HEK293 (cell line): ENCODE measurements at regions of chr2 and their contacts with region 1.

Region 1: DNA sequence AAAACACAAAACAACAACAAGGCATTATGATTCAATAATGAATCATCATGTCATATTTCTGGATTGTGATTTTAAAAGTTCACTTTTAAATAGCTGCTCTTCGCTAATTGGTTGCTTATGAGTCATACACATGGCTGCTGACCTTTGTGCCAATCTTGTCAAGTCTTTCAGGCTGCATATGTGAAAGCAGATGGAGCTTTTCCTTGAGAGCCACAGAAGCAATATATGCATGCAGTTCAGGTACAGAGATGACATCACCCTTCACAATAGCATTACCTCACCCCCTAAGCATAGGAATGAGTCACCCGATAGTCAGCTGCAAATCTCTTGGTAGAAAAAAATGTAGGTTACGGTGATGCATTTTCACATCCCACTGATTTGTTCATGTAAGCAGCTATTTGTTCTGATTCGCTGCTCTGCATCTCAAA is 27.2 kb downstream of the EIF2AK3 start:
- H3K4me3 ChIP-seq: no peak overlapping the region
- H3K27ac ChIP-seq: no peak overlapping the region; the same call in 1 of the 2 replicates
- H3K4me1 ChIP-seq: peaks cover 11% of the 10 kb centered on the region
- CTCF ChIP-seq: no peak

Region 2: DNA sequence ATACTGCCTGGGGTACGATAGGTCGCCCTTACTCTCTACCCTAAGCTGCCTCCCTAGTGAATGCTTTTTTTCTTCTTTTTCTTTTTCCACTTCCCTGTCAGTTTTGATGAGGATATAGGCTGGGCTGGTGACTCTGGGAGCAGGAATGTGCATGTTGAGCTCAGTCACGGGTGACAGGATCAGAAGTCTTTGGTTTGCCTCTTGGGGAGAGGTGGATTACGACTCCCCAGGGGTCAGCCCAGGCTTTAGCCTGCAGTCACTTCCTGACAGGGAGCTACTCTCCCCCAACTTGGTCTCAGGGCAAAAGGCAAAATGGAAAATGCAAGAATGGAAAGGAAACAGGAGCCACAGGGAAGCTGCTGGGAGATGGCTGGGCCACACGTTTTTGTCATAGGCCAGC is 372.6 kb before region 1 on chr2:
- CTCF ChIA-PET with region 1: no interaction called
- POLR2A ChIA-PET with region 1: no interaction called
- H3K4me3 ChIP-seq: no peak overlapping the region
- H3K27ac ChIP-seq: no peak overlapping the region
- H3K4me1 ChIP-seq: no peaks in the 10 kb centered on the region
- CTCF ChIP-seq: no peak

Region 3: DNA sequence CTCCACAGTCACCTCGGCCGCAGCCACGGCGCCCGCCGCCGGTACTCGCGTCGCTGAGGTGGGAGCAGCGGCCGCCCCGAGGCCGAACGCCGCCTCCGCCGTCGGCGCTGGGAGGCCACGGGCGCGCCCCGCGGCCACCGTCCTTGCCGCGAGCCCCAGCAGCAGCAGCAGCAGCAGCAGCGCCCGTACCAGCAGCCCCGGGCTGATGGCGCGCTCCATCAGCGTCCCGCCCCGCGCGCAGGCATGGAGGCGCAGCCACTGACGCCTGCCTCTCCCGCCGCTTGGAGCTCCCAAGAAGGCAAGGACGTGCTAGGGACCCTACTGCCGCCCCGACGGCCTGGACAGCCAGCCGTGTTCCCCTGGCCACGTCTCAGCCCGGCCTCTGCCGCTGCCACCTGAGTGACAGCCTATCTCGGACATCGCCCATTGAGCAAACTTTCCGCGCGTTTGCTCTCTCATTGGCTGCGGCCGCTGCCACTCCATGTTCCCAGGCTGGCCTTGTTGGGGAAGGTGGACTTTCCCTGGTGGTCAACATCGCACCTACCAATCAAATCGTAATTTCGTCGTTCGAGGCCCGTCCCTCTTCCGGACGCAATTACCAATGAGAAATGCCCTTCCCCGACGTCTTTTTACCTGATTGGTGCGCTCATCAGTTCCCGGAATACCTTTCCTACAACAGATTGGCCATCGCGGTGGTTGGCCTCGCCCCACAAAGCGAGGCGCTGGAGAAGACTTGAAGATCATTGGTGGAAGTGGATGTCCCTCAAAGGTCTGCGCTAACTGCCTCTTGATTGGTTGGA is 27.2 kb after region 1 on chr2 and contains the start of gene EIF2AK3:
- CTCF ChIA-PET with region 1: no interaction called
- POLR2A ChIA-PET with region 1: interaction called, 19 read pairs
- H3K4me3 ChIP-seq: peak within 1 kb of the TSS; percentile 97
- H3K27ac ChIP-seq: peak within 1 kb of the TSS; percentile 83
- H3K4me1 ChIP-seq: peaks cover 12% of the 10 kb centered on the region
- CTCF ChIP-seq: no peak